Ascending aorta (tissue), 2 donors: ENCODE measurements at regions of chr10 and their contacts with region 1.

Region 1: GRCh38 chr10:113385021-113385999 is 167.5 kb upstream of the HABP2 start:
- DNase-seq: peak; percentile 50 to 92
- H3K4me3 ChIP-seq: peak overlapping the region in 1 of 2 donors; percentile 52
- H3K27ac ChIP-seq: peak overlapping the region; percentile 83 to 84
- H3K4me1 ChIP-seq: peaks cover 12 to 23% of the 10 kb centered on the region in 2 donors
- H3K27me3 ChIP-seq: no peaks in the 10 kb centered on the region
- CTCF ChIP-seq: peak; percentile 82 to 89 (median 82)

Region 2: DNA sequence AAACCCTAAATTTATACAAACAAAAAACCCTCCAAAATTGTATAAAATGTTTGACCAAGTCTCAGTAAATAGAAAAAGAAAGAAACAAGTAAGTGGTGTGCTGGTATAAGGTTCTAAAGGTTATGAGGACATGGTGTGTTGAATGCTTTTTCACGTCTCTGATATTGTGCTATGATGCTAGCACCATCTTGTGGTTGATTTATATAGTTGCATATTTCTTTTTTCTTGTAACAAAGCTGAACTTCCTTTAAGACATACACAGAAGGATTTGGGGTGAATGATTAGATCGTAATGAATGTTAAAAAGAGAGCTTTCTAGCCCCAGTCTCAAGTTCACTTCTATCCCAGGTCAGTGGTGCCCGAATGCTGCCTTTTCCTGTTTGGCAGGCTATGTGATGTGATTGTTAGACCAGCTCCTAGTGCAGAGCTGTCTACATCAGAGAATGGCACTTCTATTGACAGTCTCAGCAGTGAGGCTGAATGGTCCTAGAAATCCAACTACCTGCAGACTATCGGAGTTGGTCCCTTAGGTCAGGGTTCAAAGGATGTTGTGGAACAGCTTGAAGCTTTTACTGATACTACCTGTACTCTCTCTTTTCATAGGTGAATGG is 913.3 kb before region 1 on chr10:
- intact Hi-C with region 1: loop called (anchors 5 kb)
- DNase-seq: no peak
- H3K4me3 ChIP-seq: no peak overlapping the region
- H3K27ac ChIP-seq: peak overlapping the region; percentile 18 to 46
- H3K4me1 ChIP-seq: peaks cover 0 to 3% of the 10 kb centered on the region in 2 donors
- H3K27me3 ChIP-seq: no peaks in the 10 kb centered on the region
- CTCF ChIP-seq: peak; percentile 38 to 75 (median 64)

Region 3: DNA sequence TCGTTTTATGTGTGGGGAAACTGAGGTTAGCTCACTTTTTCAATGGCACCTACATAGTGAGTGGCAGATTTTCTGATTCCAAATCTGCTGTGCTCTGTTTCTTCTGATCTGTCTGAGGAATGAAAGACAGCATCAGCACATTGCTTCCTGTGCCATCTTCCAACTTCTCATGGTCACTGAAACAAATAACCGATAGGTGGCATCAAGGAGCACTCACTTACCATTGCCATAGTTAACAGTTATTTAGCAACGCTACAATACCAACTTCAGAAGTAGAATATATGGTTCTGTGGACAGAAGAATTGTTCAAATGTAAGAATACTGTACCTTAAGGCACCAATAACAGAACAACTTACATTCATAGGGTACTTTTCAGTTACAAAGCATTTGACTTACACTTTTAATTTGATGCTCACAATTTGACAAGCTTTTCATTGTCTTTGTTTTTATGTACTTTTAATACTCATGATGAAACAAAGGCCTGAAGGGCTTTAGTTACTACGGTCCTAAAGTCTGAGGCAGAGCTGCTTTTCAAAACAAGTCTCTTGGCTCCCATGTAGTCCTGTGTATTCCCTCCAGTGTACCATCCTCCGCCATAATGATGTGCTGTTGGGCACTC is 664.1 kb before region 1 on chr10:
- intact Hi-C with region 1: loop called (anchors 2 kb)
- DNase-seq: no peak
- H3K4me3 ChIP-seq: no peak overlapping the region
- H3K27ac ChIP-seq: no peak overlapping the region
- H3K4me1 ChIP-seq: peaks cover 0 to 3% of the 10 kb centered on the region in 2 donors
- H3K27me3 ChIP-seq: no peaks in the 10 kb centered on the region
- CTCF ChIP-seq: peak; percentile 53 to 59 (median 54)

Region 4: DNA sequence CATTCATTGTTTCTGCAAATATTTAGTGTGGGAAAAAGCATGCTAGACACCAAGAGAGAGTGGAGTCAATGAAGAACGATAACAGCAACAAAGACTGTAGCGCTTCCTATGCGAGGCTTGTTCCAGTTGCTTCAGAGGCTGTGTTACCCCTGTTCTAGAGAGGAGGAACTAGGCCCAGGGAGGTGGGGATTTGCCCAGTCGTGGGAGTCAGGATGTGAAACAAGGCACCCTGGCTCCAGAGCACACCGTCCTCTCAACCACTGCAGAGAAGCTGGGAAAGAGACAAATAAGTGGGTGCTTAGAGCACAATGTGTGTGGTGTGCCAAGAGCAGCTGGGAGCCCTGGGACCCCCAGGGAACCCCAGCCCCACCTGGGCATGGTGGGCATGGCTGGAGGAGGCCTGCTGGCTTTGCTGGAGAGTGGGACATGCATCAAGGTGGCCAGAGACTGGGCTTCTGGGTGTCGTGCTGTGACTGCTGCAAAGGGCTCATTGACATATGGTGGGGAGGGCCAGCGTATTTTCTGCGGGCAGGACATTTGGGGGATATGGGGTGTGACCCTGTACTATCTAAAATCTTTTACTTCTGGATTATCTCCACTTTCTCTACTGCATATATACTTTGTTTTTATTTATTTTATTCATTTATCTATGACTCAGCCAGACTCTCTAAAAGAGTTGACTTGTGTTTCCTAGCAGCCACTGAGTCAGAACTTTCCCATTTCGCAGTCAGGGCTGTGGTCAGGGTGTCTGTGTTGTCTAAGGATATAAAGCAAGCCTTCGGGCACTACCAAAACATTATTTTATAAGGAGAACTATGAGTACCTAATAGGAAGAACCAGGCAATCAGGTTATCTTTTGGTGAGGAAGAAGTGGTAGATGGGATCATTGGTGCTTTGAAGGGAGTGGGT is 339.9 kb before region 1 on chr10:
- intact Hi-C with region 1: loop called (anchors 10 kb)
- DNase-seq: no peak
- H3K4me3 ChIP-seq: no peak overlapping the region
- H3K27ac ChIP-seq: peak overlapping the region; percentile 89 to 96
- H3K4me1 ChIP-seq: peaks cover 16 to 76% of the 10 kb centered on the region in 2 donors
- H3K27me3 ChIP-seq: no peaks in the 10 kb centered on the region
- CTCF ChIP-seq: no peak

Region 5: DNA sequence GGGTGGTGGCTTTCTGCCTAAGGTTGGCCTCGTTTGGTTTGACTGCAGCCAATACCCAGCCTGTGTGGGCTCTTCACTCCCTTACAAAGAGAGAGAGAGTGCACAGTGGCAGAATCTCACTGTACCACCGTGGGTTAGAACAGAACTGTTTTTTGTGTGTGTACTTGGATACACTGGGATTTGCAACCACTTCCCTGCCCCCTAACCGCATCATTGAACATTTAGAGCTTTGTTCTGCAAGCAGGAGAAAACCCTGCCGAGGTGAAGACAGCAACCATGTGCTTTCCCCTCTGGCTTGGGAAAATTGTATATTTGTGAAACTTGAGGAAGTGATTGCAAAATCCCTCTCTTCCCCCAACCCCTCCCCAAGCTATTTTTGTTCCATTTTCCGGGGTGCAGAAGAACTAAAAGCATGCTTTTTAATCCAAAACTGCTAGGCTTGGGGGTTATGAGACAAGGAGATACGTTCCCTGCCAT is 234.1 kb before region 1 on chr10:
- intact Hi-C with region 1: loop called (anchors 5 kb)
- DNase-seq: no peak
- H3K4me3 ChIP-seq: no peak overlapping the region
- H3K27ac ChIP-seq: no peak overlapping the region
- H3K4me1 ChIP-seq: peaks cover 0 to 2% of the 10 kb centered on the region in 2 donors
- H3K27me3 ChIP-seq: no peaks in the 10 kb centered on the region
- CTCF ChIP-seq: no peak

Region 6: GRCh38 chr10:113521123-113521795 is 135.9 kb after region 1 on chr10:
- intact Hi-C with region 1: loop called (anchors 5 kb)
- DNase-seq: peak in 1 of 2 donors; percentile 85
- H3K4me3 ChIP-seq: no peak overlapping the region
- H3K27ac ChIP-seq: no peak overlapping the region
- H3K4me1 ChIP-seq: peaks cover 0 to 20% of the 10 kb centered on the region in 2 donors
- H3K27me3 ChIP-seq: no peaks in the 10 kb centered on the region
- CTCF ChIP-seq: peak; percentile 96 to 99 (median 97)